Common myeloid progenitor, CD34-positive (primary cell): ENCODE measurements at regions of chr22 and their contacts with region 1.

Region 1: GRCh38 chr22:37608477-37609239 is at the start of gene GGA1:
- DNase-seq: peak; percentile 100
- H3K4me3 ChIP-seq: peak within 1 kb of the TSS; percentile 56 to 92 (median 84)
- H3K27ac ChIP-seq: peak within 1 kb of the TSS; percentile 81 to 87
- H3K4me1 ChIP-seq: peaks cover 10 to 50% (median 38%) of the 10 kb centered on the region in 4 experiments
- H3K27me3 ChIP-seq: no peaks in the 10 kb centered on the region

Region 2: DNA sequence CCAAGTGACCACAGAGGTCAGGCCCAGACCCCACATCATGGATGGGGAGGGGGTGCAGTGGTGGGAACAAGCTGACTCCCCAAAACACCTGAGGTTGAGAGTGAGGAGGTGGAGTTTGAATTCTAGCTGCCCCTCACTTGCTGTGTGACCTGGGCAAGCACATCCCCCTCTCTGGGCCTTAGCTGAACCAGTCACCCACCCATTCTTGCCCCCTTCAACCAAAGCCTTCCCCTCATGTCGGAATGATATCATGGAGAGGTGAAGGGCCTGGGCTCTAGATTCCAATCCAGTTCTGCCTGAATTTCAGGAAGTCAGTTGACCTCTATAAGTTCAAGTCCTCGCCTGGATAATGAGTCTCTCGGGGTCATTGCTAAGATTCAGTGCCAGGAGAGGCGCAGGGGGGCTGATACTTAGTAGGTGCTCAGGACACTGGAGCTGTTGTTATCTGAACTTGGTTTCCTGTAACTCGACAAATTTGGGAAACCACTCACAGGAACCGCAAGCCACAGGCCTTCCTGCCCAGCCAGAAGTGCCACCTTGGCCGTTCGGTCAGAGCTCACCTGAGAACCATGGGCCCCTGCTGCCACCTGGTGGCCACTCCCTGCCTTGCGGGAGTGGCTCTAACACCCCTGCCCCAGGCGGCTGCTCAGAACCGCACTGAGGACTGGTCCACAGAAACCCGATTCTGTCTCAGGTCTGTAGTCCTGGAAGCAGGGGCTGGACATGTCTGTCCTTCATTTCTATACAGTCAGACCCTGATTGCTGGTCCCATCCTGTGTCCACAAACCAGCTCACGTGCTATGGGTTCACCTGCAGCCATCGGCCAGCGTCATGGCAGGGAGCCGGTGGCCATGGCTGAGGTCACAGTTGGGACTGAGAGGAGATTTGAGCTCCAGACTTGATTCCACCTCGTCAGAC is 41.5 kb before region 1 on chr22:
- CTCF ChIA-PET with region 1: interaction called, 15 read pairs
- POLR2A ChIA-PET with region 1: no interaction called
- DNase-seq: peak; percentile 90 to 94 (median 93)
- H3K4me3 ChIP-seq: peak overlapping the region in 1 of 7 experiments; percentile 22
- H3K27ac ChIP-seq: no peak overlapping the region
- H3K4me1 ChIP-seq: peaks cover 5 to 28% (median 19%) of the 10 kb centered on the region in 4 experiments
- H3K27me3 ChIP-seq: peaks cover 0 to 32% (median 12%) of the 10 kb centered on the region in 5 experiments

Region 3: GRCh38 chr22:37588546-37589215 is 20.0 kb before region 1 on chr22:
- CTCF ChIA-PET with region 1: interaction called, 12 read pairs
- POLR2A ChIA-PET with region 1: interaction called, 6 read pairs
- DNase-seq: no peak
- H3K4me3 ChIP-seq: no peak overlapping the region
- H3K27ac ChIP-seq: no peak overlapping the region
- H3K4me1 ChIP-seq: peaks cover 0 to 7% (median 3%) of the 10 kb centered on the region in 4 experiments
- H3K27me3 ChIP-seq: peaks cover 0 to 3% (median 0%) of the 10 kb centered on the region in 5 experiments

Region 4: DNA sequence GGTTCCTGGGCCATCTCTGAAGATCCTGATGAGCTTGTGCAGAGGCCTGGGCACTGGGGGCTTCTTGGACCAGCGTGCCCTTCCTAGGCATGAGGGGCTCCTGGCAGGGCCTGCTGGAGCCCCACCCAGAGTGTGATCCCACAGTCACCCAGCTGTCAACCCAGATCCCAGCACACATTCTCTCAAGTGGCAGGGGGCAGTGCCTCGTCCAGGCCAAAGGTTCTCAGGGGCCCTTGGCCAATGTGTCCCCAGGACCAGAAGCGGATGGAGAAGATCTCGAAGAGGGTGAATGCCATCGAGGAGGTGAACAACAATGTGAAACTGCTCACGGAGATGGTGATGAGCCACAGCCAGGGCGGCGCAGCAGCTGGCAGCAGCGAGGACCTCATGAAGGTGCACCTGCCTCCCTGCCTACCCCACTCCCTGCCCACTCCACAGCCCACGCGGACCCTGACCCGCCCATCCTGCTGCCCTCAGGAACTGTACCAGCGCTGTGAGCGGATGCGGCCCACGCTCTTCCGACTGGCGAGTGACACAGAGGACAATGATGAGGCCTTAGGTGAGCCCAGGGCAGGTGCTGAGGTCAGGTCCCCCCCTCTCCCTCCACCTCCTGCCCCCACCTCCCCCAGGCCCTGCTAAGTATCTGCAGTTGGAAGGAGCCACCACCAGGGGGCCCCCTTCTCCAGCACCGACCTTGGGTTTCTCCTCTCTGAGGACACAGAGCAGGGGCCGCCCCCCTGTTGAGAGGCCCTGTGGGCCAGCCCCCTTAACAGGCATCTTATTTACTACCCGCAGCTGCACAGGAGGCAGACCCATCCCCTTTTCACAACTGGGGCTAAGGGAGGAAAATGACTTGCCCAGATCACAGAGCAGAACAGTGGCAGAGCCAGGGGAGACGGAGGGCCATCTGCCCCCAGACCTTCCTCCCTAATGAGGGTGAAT is 14.7 kb after region 1 on chr22:
- CTCF ChIA-PET with region 1: interaction called, 622 read pairs
- POLR2A ChIA-PET with region 1: interaction called, 3 read pairs
- DNase-seq: peak in 2 of 3 donors; percentile 78 to 82
- H3K4me3 ChIP-seq: no peak overlapping the region
- H3K27ac ChIP-seq: peak overlapping the region; percentile 20 to 32
- H3K4me1 ChIP-seq: peaks cover 4 to 42% (median 32%) of the 10 kb centered on the region in 4 experiments
- H3K27me3 ChIP-seq: no peaks in the 10 kb centered on the region